Panc1 (cell line): ENCODE measurements at regions of chr2 and their contacts with region 1.

Region 1: GRCh38 chr2:230400041-230400440 is 16.0 kb upstream of the SP100 start:
- DNase-seq: no peak
- ATAC-seq: no peak
- H3K4me3 ChIP-seq: no peak overlapping the region
- H3K27ac ChIP-seq: no peak overlapping the region
- H3K4me1 ChIP-seq: no peaks in the 10 kb centered on the region
- H3K27me3 ChIP-seq: no peaks in the 10 kb centered on the region
- CTCF ChIP-seq: no peak

Region 2: DNA sequence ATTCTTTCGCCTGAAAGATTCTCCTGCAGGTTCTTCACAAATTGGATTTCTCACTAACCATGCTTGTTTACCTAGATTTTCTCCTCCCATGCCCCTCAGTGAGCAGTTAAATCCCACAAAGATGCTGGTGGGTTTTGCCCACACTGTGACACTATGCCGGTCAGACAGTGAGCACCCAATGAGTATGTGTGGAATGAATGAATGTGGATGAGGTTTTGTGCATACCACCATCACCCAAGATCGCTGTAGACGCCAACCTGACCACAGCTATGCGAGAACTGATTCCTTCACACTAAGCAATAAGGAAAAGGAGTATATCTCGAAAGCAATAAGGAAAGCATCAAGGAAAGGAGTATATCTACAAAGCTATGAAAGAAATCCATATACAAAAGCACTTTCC is 1245.7 kb before region 1 on chr2:
- CTCF ChIA-PET with region 1: no interaction called
- POLR2A ChIA-PET with region 1: no interaction called
- in situ Hi-C with region 1: no loop called
- intact Hi-C with region 1: no loop called
- DNase-seq: no peak
- ATAC-seq: no peak
- H3K4me3 ChIP-seq: no peak overlapping the region
- H3K27ac ChIP-seq: no peak overlapping the region
- H3K4me1 ChIP-seq: no peaks in the 10 kb centered on the region
- H3K27me3 ChIP-seq: no peaks in the 10 kb centered on the region
- CTCF ChIP-seq: no peak

Region 3: GRCh38 chr2:230377071-230377470 is 23.0 kb before region 1 on chr2:
- CTCF ChIA-PET with region 1: no interaction called
- POLR2A ChIA-PET with region 1: interaction called, 10 read pairs
- in situ Hi-C with region 1: no loop called
- intact Hi-C with region 1: no loop called
- DNase-seq: no peak
- ATAC-seq: no peak
- H3K4me3 ChIP-seq: no peak overlapping the region
- H3K27ac ChIP-seq: no peak overlapping the region
- H3K4me1 ChIP-seq: no peaks in the 10 kb centered on the region
- H3K27me3 ChIP-seq: no peaks in the 10 kb centered on the region
- CTCF ChIP-seq: no peak